Activated T-helper 2 cell treated with anti-CD3 and anti-CD28 coated beads, Interferon-gamma antibody, Interleukin-2, Interleukin-4, amounts not matched to agents 10 μg/mL and 5 μg/mL and 100 μg/mL, durations not matched to agents 14 hours and 24 hours and 36 hours (primary cell): ENCODE measurements at regions of chr5 and their contacts with region 1.

Region 1: DNA sequence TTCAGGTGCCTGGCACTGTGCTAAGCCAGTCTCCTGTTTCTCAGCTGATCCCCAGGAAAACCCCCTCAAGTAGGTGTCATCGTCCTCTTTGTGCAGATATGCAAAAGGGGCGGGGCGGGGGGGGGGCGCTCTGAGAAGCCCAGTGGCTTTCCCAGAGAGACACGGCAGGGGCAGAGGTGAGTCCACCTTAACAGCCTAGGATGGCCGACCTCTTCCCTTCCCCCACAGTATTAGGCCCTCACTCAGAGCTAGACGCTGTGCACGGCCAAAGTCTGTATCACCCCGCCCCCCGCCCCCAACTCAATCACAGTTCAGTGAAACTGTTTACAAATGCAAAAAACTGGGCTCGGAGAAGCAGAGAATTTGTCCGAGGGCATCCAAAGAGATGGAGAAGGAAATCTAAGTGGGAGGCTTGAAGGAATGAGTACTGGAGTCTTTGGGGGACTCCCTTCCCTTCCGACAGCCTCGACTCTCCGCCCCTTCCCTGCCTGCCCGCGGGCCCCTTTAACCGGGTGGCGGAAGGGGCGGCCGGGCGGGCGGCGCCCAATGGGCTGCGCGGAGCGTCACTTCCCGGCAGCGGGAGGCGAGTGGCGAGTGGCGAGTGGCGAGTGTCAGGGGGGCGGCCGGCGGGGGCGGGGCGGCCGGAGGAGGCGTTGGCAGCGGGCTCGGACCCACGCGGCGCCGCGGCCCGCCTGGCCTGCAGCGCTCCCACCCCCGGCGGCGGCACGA is at the start of gene ERGIC1:
- DNase-seq: peak; percentile 70
- H3K4me3 Mint-ChIP-seq: peak within 1 kb of the TSS; percentile 84
- H3K27ac Mint-ChIP-seq: peak within 1 kb of the TSS; percentile 78
- H3K4me1 Mint-ChIP-seq: peaks cover 34% of the 10 kb centered on the region
- H3K27me3 Mint-ChIP-seq: no peaks in the 10 kb centered on the region
- total RNA-seq, gene ERGIC1: 53.1 and 54.8 TPM in 2 replicates

Region 2: DNA sequence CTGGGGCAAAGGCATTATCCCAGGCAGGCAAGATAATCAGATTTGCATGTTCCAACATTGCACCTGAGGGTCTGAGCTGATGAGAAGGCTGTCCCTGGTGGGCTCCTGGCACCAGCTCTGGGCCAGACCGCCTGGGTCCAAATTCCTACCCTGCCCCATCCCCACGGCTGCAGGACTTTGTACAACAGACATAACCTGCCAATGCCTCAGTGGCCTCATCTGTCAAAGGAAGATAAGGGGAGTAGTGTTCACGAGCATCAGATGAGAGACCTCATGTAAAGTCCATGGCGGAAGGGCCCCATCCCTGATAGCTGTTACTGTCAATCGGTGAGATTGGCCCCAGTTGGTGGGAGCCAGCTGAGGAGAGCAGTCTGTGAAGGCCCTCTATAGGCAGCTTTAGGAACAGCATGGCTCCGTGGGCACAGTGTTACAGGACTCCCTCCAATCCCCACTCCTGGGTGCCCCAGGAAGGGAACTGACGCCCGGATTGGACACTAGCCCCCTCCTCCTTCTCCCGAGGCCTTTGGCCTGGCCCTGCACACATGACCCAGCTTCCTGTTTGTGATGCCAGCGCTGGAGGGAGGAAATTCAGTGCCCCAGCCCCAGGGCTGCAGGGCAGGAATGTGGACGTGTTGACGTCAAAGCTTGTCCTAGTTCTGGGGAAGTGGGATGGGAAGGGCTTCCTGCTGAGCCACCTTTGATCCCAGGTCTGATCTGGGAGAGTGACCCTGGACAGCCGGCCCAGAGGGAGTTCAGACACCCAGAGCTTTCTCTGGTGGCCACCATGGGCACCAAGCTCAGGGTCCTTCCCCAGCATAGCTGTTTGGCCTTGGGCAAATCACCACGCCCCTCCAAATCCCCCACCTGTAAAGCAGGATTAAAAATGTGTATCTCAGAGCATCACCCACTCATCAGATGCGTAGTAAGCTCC is 119.1 kb before region 1 on chr5:
- intact Hi-C with region 1: loop called (anchors 10 kb)
- DNase-seq: peak; percentile 48
- H3K4me3 Mint-ChIP-seq: no peak overlapping the region
- H3K27ac Mint-ChIP-seq: no peak overlapping the region
- H3K4me1 Mint-ChIP-seq: peaks cover 2% of the 10 kb centered on the region
- H3K27me3 Mint-ChIP-seq: no peaks in the 10 kb centered on the region

Region 3: DNA sequence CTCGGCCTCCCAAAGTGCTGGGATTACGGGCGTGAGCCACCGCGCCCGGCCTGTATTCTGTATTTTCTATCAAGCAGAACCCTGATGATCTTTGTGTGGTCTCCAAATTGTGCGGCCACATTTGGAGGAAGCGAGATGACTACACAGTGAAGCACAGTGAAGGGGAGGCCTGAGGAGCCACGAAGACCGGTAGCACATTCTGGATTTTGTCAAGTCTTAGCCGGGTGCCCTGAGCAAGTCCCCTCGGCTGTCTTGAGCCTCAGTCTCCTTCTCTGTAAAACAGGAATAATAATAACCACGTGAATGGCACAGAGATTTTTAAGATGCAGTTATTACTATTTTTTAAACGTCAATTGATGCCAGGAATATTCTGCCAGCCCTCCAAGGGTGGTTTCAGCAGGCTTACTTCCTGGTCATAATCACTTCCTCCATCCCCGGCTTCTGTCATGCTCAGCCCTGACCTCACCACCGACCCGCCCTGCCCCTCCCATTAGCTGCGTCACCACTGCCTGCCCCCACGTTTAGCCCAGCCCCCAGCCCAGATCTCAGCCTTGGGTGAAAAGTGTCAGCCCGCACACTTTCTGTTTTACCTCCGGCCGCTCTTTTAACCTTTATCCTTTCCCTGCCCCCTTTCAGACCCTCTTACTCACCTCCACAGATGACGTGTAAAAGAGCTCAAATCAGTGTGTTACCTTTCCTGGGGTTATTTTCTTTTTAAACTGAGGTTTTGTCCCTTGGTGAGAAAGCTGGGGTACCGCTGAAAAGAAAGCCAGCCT is 26.8 kb before region 1 on chr5:
- intact Hi-C with region 1: loop called (anchors 1 kb)
- DNase-seq: peak; percentile 78
- H3K4me3 Mint-ChIP-seq: peak overlapping the region; percentile 58
- H3K27ac Mint-ChIP-seq: peak overlapping the region; percentile 91
- H3K4me1 Mint-ChIP-seq: peaks cover 14% of the 10 kb centered on the region
- H3K27me3 Mint-ChIP-seq: no peaks in the 10 kb centered on the region